ENCODE measurements at regions of chr2 and their contacts with region 1.

Region 1: DNA sequence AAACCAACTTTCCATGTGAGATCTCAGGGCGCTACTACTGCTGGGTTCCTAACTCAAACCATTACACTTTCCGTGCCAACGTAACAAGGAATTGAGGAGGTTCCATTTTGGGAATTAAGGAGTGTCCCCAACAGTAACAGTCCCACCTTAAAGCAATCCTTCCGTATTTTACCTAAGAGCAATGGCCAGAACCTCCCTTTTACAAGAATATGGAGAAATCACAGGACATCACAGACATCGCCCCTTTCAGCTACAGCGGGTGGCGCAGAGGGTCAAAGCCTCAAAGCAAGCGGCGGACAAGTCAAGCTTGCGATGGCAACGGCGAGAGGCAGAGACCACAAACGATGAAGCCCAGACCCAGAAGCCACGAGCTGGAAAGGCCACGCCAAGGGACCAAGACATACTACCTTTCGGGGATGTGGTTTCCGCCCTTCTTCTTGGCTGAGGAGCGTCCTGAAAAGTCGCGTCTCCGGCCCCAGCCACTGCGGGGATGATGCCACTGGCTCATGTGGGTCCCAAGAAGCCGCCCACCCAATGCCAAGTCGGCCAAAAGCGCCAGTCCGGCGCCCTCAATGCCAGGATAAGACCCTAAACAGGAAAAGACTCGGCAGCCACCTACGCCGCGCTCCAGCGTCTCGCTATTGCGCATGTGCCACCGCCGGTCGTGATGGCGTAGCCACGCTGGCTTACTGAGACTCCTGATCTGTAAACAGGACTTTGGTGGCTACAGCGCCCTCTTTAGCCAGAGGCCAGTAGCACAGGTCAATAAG is at the start of gene DUSP11:
- DNase-seq: peak; percentile 97
- ATAC-seq: peak; percentile 100
- total RNA-seq, gene DUSP11: 10.6 TPM

Region 2: GRCh38 chr2:73697606-73698005 is 82.0 kb before region 1 on chr2:
- intact Hi-C with region 1: loop called (anchors 10 kb)
- DNase-seq: no peak
- ATAC-seq: no peak

Region 3: GRCh38 chr2:73736855-73737779 is 42.5 kb before region 1 on chr2 and contains the start of gene TPRKB:
- intact Hi-C with region 1: loop called (anchors 10 kb)
- DNase-seq: peak; percentile 97
- ATAC-seq: peak; percentile 100
- total RNA-seq, gene TPRKB: 45.9 TPM

Region 4: DNA sequence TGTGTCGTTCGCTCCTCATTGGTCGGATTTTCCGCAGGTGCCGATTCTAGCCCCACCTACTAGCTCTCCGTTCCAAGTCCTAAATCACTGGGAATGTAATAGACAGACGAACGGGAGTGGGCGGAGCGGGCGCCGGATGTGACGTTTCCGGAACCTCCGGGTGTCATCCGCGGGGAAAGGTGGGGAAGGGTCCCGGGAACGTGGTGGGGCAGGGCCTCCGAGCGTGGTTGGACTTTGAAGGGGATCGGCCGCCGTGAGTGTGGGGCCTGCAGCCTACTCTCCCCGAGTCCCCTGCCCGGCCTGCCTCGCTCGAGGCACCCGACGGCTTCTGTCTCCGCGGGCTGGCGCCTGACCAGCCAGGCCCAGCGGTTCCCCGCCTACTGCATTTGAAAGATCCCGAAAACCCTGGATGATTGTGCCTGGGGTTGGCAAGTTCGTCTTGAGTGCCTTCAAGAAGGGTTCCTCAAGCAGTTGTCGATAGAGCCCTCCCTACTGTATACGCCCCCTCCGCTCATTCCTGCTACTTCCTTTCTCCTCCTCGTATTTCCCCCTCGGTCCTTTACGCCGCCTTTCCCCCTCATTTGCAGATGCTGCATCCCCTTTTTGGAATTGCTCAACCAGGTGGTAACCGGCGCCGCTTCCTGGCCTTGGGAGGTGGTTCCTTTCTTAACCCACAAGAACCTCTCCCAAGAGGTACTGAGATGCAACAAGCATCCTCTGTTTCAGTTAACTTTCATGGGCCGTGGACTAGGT is 49.3 kb after region 1 on chr2 and contains the start of gene STAMBP:
- intact Hi-C with region 1: no loop called
- DNase-seq: peak; percentile 97
- ATAC-seq: peak; percentile 98
- total RNA-seq, gene STAMBP: 27.8 TPM

Region 5: DNA sequence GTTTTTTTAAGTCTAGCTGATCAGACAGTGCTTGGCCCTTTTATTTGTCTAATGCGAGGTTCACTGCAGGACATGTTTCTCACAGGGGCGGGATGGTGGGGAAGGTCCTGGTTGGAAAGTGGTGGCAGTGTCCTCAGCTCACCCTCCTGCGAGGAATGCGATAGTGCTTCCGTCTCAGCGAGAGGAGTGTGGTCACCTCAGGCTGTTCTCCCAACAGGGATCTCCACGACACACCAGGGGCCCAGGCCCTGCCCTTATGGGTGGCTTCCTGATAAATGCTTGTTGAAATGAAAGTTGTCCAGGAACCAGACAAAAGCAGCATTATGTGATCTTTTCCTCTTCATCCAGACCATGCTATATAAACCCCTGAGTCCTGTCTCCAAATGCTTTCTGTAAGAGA is 298.0 kb after region 1 on chr2:
- intact Hi-C with region 1: no loop called
- DNase-seq: no peak
- ATAC-seq: peak; percentile 77

Measured in Right ventricle myocardium inferior (tissue), 1 donor.